Activated T-helper 1 cell treated with anti-CD3 and anti-CD28 coated beads, Interleukin-12 subunit alpha, Interleukin-12 subunit beta, Interleukin-2, Interleukin-4 antibody, amounts not matched to agents 30 ng/mL and 10 ng/mL and 1 ng/mL, durations not matched to agents 14 hours and 24 hours and 36 hours (primary cell): ENCODE measurements at regions of chr6 and their contacts with region 1.

Region 1: GRCh38 chr6:116531675-116532570 is 13.6 kb downstream of the TRAPPC3L start:
- DNase-seq: peak; percentile 56
- H3K4me3 Mint-ChIP-seq: no peak overlapping the region
- H3K27ac Mint-ChIP-seq: no peak overlapping the region
- H3K4me1 Mint-ChIP-seq: no peaks in the 10 kb centered on the region
- H3K27me3 Mint-ChIP-seq: peaks cover 46% of the 10 kb centered on the region

Region 2: DNA sequence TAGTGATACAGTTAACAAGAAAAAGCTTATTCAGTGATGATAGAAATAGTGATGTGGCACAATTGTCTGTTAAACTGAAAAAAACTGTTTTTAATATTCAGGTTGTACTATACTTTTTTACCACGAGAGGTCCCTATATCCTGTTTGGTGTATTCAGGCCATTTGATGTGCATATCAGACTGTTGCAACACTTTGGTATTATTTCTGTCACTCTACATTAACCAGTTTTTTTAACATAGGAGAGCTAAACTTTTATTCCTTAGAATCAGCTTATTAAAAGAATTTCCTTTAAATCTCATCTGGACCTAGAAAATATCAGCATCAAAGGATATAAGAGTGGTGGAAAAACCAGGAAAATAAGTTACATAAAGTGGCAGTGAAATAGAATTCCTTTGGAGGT is 314.9 kb before region 1 on chr6:
- intact Hi-C with region 1: loop called (anchors 1 kb)
- DNase-seq: no peak
- H3K4me3 Mint-ChIP-seq: no peak overlapping the region
- H3K27ac Mint-ChIP-seq: no peak overlapping the region
- H3K4me1 Mint-ChIP-seq: no peaks in the 10 kb centered on the region
- H3K27me3 Mint-ChIP-seq: no peaks in the 10 kb centered on the region

Region 3: DNA sequence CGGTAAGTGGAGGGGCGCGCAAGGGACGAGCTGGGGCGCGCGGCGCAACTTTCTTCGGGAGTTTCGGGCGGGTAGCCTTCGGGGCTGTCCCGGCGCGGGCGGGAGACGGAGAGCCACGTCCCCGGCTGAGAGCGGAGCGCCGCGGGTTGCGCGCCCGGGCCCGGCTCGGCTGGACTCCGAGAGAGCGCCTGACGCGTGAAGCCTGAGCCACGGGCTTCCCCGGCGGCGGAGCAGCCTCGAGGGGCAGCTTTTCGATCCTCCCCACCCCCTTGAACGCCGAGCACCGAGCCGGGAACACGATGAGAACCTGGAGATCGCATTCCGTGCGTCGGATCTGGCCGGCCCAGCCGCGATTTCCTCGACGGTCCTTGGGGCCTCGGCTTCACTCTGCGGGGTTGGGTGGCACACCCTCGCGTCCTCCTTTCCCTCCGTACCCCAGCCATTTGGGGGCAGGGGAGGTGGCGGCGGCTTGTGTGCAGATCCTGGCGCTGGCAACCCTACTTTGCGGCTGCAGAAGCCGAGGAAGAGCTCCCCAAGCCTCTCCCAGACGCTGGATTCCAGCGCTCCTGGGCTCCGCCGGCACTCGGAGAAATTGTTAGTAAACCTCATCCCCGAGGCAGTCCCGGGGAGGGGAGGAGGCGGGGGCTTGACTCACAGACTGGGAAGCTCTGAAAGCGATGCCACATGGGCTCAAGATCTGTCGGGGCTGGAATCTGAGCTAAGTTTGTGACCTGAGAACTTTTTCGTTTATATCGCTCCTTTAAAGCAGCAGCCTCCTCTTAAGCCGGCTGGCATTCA is 160.6 kb before region 1 on chr6:
- intact Hi-C with region 1: loop called (anchors 2 kb)
- DNase-seq: no peak
- H3K4me3 Mint-ChIP-seq: peak overlapping the region; percentile 74
- H3K27ac Mint-ChIP-seq: no peak overlapping the region
- H3K4me1 Mint-ChIP-seq: peaks cover 24% of the 10 kb centered on the region
- H3K27me3 Mint-ChIP-seq: peaks cover 60% of the 10 kb centered on the region

Region 4: GRCh38 chr6:116461932-116462885 is 69.7 kb before region 1 on chr6:
- intact Hi-C with region 1: loop called (anchors 5 kb)
- DNase-seq: peak; percentile 67
- H3K4me3 Mint-ChIP-seq: peak overlapping the region; percentile 87
- H3K27ac Mint-ChIP-seq: peak overlapping the region; percentile 87
- H3K4me1 Mint-ChIP-seq: peaks cover 89% of the 10 kb centered on the region
- H3K27me3 Mint-ChIP-seq: peaks cover 1% of the 10 kb centered on the region

Region 5: DNA sequence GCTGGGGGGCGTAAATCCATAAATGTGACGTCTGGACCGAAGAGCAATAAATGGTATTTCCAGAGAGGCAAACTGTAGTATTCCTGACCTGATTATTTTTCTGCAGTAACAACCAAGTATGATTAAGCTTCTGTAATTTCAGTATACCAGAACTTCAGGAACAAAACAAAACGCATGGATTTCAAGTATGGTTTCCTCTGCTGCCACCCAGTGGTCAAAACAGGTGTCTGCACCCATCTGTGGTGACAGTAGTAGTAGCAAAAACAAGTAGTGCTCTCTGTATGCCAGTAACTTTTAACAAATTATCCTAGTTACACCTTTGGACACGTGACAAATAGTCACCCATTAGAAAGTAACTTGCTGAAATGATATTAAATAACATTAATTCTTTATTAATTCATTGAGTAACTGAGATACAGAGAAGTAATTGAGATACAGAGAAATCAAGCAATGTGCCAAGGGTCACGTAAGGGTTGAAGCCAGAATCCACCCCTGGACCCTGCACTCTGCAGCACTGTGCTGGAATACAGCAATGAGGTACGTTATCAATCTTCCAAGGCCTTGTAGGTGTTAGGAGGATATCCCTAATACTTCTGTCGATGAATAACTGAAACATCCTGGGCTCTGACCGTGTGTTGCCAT is 29.6 kb after region 1 on chr6:
- intact Hi-C with region 1: loop called (anchors 1 kb)
- DNase-seq: peak; percentile 51
- H3K4me3 Mint-ChIP-seq: no peak overlapping the region
- H3K27ac Mint-ChIP-seq: no peak overlapping the region
- H3K4me1 Mint-ChIP-seq: no peaks in the 10 kb centered on the region
- H3K27me3 Mint-ChIP-seq: peaks cover 12% of the 10 kb centered on the region